Activated T-helper 1 cell treated with anti-CD3 and anti-CD28 coated beads, Interleukin-12 subunit alpha, Interleukin-12 subunit beta, Interleukin-2, Interleukin-4 antibody, amounts not matched to agents 30 ng/mL and 10 ng/mL and 1 ng/mL, durations not matched to agents 14 hours and 24 hours and 36 hours (primary cell): ENCODE measurements at regions of chr4 and their contacts with region 1.

Region 1: DNA sequence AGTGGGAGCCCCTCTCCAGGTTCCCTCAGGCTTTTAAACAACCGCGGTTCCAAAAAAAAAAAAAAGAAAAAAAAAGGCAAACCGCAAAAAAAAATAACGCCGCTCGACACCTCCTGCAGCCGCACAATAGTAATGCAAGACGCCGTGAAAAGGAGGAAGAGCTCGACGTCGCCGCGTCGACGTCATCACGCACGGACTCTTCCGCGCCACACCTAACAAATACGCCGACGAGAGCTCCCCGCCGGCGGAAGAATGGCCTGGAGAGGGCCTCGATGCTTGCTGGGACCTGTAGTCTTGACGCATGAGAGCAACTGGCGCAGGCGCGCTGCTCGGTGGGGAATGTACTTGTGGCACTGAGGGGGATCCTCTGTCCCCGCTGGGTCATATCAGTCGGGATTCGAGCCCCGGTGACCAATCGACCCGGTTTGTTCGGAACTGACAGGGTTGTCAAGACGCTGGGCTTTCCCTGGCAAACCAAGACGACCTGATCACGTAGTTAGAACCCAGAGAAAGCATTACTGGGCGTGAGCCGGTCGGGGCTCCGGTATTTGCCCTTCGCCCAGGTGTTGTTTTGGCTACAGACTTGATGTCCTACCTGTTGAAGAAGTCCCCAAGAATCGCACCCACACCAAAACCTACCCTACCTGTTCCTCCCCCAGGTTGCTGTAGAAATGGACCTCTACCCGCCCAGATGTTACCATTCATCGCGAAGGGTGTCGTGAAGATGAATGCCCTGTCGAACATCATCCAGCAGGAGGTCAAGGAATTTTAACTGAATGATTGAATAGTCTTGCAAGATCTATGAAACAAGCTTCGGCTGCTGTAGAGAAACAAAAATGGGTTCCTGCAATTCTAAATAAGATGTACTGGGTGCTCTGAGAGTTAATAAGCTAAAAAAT is at the start of gene CBR4:
- DNase-seq: peak; percentile 94
- H3K4me3 Mint-ChIP-seq: peak within 1 kb of the TSS; percentile 93
- H3K27ac Mint-ChIP-seq: peak within 1 kb of the TSS; percentile 96
- H3K4me1 Mint-ChIP-seq: peaks cover 46% of the 10 kb centered on the region
- H3K27me3 Mint-ChIP-seq: peaks cover 6% of the 10 kb centered on the region
- total RNA-seq, gene CBR4: 18.9 and 20.9 TPM in 2 replicates

Region 2: GRCh38 chr4:168480931-168481611 is 529.3 kb before region 1 on chr4:
- intact Hi-C with region 1: loop called (anchors 10 kb)
- DNase-seq: peak; percentile 47
- H3K4me3 Mint-ChIP-seq: peak overlapping the region; percentile 89
- H3K27ac Mint-ChIP-seq: peak overlapping the region; percentile 98
- H3K4me1 Mint-ChIP-seq: peaks cover 58% of the 10 kb centered on the region
- H3K27me3 Mint-ChIP-seq: peaks cover 2% of the 10 kb centered on the region

Region 3: GRCh38 chr4:168831919-168832762 is 178.2 kb before region 1 on chr4:
- intact Hi-C with region 1: loop called (anchors 1 kb)
- DNase-seq: peak; percentile 51
- H3K4me3 Mint-ChIP-seq: peak overlapping the region; percentile 84
- H3K27ac Mint-ChIP-seq: peak overlapping the region; percentile 55
- H3K4me1 Mint-ChIP-seq: peaks cover 18% of the 10 kb centered on the region
- H3K27me3 Mint-ChIP-seq: peaks cover 46% of the 10 kb centered on the region

Region 4: GRCh38 chr4:169270810-169271691 is 260.7 kb after region 1 on chr4 and contains the start of gene SH3RF1:
- intact Hi-C with region 1: loop called (anchors 5 kb)
- DNase-seq: no peak
- H3K4me3 Mint-ChIP-seq: peak within 1 kb of the TSS; percentile 81
- H3K27ac Mint-ChIP-seq: no peak within 1 kb of the TSS
- H3K4me1 Mint-ChIP-seq: peaks cover 5% of the 10 kb centered on the region
- H3K27me3 Mint-ChIP-seq: peaks cover 51% of the 10 kb centered on the region
- total RNA-seq, gene SH3RF1: 0.49 and 0.69 TPM in 2 replicates

Region 5: DNA sequence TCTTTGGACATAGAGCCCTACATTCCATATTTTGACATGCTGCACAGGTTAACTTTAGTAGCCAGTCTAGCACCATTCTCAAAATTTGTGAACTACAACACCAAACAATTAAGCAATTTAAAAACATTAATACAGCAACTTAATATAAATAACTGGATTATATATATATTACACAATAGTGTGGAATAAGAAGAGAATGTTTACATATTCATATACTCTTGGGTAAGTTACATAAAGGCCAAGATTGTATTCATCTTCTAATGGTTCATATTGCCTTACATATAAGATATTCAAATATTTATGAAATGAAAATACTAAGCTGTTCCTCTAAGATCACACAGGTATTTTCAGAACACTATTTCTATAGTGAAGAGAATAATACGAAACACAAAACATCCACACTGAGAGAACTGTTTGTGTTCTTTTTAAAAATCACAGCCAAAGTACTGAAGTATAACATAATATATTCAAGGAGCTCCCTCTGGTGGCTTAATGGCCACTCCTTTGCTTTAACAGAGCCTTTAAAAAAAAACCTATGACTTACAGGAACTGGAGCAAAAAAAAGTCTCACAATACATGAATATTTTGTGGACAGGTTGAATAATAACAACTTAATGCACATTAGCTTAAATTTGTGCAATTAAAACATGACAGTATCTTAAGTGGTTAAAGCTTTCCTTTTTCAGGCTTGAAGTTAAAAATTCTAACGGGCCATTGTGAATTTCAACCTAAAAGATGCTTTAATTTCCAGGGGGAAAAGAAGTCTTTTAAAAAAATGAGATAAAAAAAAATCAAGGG is 555.8 kb after region 1 on chr4:
- intact Hi-C with region 1: loop called (anchors 5 kb)
- DNase-seq: no peak
- H3K4me3 Mint-ChIP-seq: no peak overlapping the region
- H3K27ac Mint-ChIP-seq: no peak overlapping the region
- H3K4me1 Mint-ChIP-seq: peaks cover 9% of the 10 kb centered on the region
- H3K27me3 Mint-ChIP-seq: no peaks in the 10 kb centered on the region

Region 6: GRCh38 chr4:169757575-169758184 is 747.3 kb after region 1 on chr4 and contains the start of gene HPF1:
- intact Hi-C with region 1: loop called (anchors 1 kb)
- DNase-seq: peak; percentile 92
- H3K4me3 Mint-ChIP-seq: peak within 1 kb of the TSS; percentile 93
- H3K27ac Mint-ChIP-seq: peak within 1 kb of the TSS; percentile 69
- H3K4me1 Mint-ChIP-seq: peaks cover 32% of the 10 kb centered on the region
- H3K27me3 Mint-ChIP-seq: peaks cover 2% of the 10 kb centered on the region
- total RNA-seq, gene HPF1: 21.5 and 23.4 TPM in 2 replicates